ENCODE measurements at regions of chr16 and their contacts with region 1.

Region 1: DNA sequence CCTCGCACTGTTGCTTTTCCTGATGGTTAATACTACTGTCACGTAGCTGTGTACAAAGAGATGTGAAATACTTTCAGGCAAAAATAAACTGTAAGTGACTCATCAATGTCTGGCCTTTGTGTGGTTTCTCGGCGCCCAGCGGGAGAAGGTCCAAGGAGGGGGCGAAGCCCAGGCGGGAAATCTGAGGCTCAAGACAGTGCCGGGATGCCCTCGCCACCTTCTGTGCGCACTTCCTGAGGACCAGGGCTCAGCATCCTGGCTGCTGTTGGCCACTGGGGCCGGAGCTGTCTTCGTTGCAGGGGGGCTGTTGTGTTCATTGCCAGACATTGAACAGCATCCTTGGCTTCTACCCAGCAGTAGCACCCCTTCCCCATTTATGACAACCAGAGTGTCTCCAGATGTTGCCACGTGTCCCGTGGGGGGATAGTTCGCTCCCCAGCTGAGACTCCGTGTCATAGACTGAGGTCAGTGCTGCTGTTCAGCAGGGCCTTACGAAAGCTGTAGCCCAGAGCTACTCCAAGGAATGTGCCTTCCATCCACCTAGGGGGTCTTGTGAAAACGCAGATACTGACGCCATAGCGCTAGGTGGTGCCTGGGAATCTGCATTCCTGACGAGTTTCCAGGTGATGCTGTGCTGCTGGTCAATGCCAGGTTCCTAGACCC is 67.3 kb upstream of the PLCG2 start:
- DNase-seq: peak; percentile 92 to 97
- ATAC-seq: peak; percentile 77 to 82
- H3K4me3 ChIP-seq: no peak overlapping the region
- H3K27ac ChIP-seq: peak overlapping the region; percentile 94 to 97
- H3K4me1 ChIP-seq: peaks cover 71% of the 10 kb centered on the region
- CTCF ChIP-seq: no peak
- EP300 ChIP-seq: peak; percentile 98 to 100
- POLR2A ChIP-seq: no peak
- RAD21 ChIP-seq: peak; percentile 4 to 28; a peak in 3 of 5 replicates

Region 2: GRCh38 chr16:81686391-81687130 is 25.2 kb before region 1 on chr16:
- CTCF ChIA-PET with region 1: no interaction called
- POLR2A ChIA-PET with region 1: no interaction called
- DNase-seq: no peak
- ATAC-seq: peak; percentile 6 to 20; a peak in 2 of 6 replicates
- H3K4me3 ChIP-seq: no peak overlapping the region
- H3K27ac ChIP-seq: no peak overlapping the region
- H3K4me1 ChIP-seq: no peaks in the 10 kb centered on the region
- CTCF ChIP-seq: no peak
- EP300 ChIP-seq: no peak
- POLR2A ChIP-seq: no peak
- RAD21 ChIP-seq: no peak

Region 3: DNA sequence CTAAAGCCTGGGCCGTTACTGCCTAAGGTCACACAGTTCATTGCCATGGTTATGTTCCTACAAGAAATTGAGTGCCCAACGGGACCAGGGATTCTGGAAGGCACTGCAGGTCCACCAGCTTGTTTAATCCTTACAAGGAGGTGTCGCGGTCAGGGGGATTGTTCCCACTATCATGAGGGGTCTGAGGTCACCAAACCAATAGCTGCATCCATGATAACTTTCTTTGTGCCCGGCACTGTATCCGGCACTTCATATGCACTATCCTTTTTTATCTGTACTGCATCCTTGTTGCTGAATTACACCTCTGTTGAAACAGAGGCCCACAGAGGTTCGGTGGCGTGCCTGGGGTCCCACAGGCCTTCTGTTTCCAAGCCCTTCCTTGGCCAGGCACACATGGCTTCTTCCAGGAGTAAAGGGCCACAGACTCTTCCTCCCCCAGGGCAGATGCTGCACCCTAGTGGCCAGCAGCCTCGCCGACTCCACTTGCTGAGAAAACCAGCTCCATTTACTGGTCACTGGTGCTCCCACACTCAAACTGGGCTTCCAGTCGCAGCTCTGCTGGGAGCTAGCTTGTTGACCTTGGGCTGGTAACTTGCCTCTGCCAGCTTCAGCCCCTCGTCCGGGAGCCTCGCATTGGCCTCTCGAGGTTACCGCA is 14.7 kb before region 1 on chr16:
- CTCF ChIA-PET with region 1: interaction called, 27 read pairs
- POLR2A ChIA-PET with region 1: no interaction called
- DNase-seq: peak; percentile 59 to 76
- ATAC-seq: peak; percentile 59 to 78; a peak in 5 of 6 replicates
- H3K4me3 ChIP-seq: no peak overlapping the region
- H3K27ac ChIP-seq: peak overlapping the region; percentile 10 to 75; a peak in 4 of 6 replicates
- H3K4me1 ChIP-seq: peaks cover 40% of the 10 kb centered on the region
- CTCF ChIP-seq: peak; percentile 66
- EP300 ChIP-seq: no peak
- POLR2A ChIP-seq: no peak
- RAD21 ChIP-seq: peak; percentile 70 to 73

Region 4: DNA sequence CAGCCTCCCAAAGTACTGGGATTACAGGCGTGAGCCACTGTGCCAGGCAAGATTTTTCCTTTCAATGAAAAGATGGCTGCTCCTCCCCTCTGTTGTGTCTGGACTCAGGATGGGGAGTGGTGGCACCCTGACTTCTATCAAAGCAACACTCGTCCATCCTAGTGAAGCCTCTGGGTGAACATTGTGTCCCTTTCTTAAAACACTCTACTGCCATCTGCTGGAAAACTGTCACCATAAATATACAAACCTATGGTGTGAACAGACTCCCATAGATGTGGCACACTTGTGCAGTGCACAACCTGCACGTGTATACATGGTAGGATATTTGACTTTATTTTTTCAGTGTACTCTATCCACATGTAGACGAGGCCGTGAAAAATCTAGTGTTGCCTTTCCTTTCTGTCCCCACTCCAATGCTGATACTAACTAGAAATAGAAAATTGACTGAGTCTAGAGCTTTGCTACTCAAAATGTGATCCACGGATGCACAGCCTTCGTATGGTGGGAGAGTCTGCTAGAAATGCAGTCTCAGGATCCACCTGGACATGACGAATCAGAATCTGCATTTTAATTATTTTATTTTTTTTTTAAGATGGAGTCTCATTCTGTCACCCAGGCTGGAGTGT is 11.4 kb after region 1 on chr16:
- CTCF ChIA-PET with region 1: interaction called, 42 read pairs
- POLR2A ChIA-PET with region 1: interaction called, 3 read pairs
- DNase-seq: peak; percentile 89 to 92
- ATAC-seq: peak; percentile 93 to 94
- H3K4me3 ChIP-seq: no peak overlapping the region
- H3K27ac ChIP-seq: peak overlapping the region; percentile 75 to 94
- H3K4me1 ChIP-seq: peaks cover 36% of the 10 kb centered on the region
- CTCF ChIP-seq: peak; percentile 90
- EP300 ChIP-seq: no peak
- POLR2A ChIP-seq: no peak
- RAD21 ChIP-seq: peak; percentile 94 to 96

Region 5: GRCh38 chr16:82439671-82440293 is 728.0 kb after region 1 on chr16:
- CTCF ChIA-PET with region 1: no interaction called
- POLR2A ChIA-PET with region 1: no interaction called
- DNase-seq: peak in 1 of 2 experiments; percentile 45
- ATAC-seq: peak; percentile 68 to 86; a peak in 5 of 6 replicates
- H3K4me3 ChIP-seq: no peak overlapping the region
- H3K27ac ChIP-seq: no peak overlapping the region
- H3K4me1 ChIP-seq: no peaks in the 10 kb centered on the region
- CTCF ChIP-seq: no peak
- EP300 ChIP-seq: no peak
- POLR2A ChIP-seq: no peak
- RAD21 ChIP-seq: no peak

Measured in A549 (cell line).